HEK293 (cell line): ENCODE measurements at regions of chr7 and their contacts with region 1.

Region 1: GRCh38 chr7:73851410-73852234 is 9.3 kb upstream of the METTL27 start:
- H3K4me3 ChIP-seq: no peak overlapping the region
- H3K27ac ChIP-seq: peak overlapping the region; percentile 24; the same call in 1 of the 2 replicates
- H3K4me1 ChIP-seq: peaks cover 9% of the 10 kb centered on the region
- CTCF ChIP-seq: no peak

Region 2: DNA sequence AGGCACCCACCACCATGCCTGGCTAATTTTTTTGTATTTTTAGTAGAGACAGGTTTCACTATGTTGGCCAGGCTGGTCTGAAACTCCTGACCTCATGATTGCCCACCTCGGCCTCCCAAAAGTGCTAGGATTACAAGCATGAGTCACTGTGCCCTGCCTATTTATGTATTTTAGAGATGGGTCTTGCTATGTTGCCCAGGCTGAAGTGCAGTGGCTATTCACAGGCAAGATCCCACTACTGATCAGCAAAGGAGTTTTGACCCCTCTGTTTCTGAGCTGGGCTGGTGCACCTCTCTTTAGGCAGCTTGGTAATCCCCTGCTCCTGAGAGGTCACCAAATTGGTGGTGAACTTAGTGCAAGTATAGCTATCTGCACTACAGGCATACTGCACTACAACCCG is 119.2 kb before region 1 on chr7:
- CTCF ChIA-PET with region 1: interaction called, 14 read pairs
- POLR2A ChIA-PET with region 1: interaction called, 16 read pairs
- H3K4me3 ChIP-seq: no peak overlapping the region
- H3K27ac ChIP-seq: no peak overlapping the region
- H3K4me1 ChIP-seq: no peaks in the 10 kb centered on the region
- CTCF ChIP-seq: no peak

Region 3: DNA sequence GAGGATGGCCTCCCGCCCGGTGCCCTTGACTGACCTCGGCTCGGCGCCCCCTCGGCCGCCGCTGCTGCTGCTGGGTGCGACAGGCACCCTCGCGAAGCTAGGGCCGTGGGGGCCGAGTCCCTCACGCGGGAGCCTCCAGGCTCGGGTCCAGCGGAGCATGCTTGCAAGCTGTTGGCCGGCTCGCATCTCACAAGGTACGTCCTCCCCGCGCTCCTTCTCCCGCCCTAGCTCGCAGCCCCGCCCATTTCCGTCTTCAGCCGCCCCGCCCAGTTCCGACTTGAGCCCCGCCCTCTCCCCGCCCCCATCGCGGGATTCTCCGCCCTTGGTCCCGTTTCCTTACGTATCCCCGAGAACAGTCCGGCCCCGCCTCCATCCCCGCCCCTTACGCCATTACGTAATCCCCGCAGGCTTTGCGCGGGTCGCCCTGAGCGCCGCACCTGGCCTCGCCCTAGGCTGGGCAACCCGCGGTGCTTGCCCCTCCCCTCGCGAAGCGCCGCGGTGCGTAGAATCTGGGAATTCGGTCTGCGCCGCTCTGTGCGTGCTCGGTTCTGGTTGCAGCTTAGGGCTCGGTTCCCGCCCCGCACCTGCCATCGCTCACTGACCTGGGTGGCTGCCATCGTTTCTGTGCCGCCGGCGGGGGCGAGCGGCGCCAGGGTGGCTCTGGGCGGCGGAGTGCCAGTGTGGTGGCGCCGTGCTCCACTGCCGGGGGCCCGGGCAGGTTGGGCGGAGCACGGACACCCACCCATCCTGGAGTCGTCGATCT is 112.8 kb before region 1 on chr7 and contains the start of gene ABHD11:
- CTCF ChIA-PET with region 1: interaction called, 18 read pairs
- POLR2A ChIA-PET with region 1: interaction called, 16 read pairs
- H3K4me3 ChIP-seq: peak within 1 kb of the TSS; percentile 67
- H3K27ac ChIP-seq: peak within 1 kb of the TSS; percentile 90
- H3K4me1 ChIP-seq: peaks cover 8% of the 10 kb centered on the region
- CTCF ChIP-seq: peak; percentile 72

Region 4: DNA sequence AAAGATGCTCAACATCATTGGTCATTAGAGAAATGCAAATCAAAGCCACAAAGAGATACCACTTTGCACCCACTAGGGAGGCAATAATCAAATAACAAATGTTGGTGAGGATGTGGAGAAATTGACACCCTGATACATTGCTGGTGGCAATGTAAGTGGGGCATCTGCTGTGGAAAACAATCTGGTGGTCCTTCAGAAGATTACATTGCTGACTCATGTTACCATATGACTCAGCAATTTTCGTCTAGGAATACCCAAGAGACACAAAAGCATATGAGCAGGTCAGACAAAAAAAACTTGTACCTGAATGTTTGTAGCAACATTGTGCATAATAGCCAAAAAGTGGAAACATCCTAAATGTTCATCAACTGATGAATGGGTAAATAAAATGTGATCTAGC is 76.7 kb before region 1 on chr7:
- CTCF ChIA-PET with region 1: no interaction called
- POLR2A ChIA-PET with region 1: no interaction called
- H3K4me3 ChIP-seq: no peak overlapping the region
- H3K27ac ChIP-seq: no peak overlapping the region
- H3K4me1 ChIP-seq: no peaks in the 10 kb centered on the region
- CTCF ChIP-seq: no peak

Region 5: DNA sequence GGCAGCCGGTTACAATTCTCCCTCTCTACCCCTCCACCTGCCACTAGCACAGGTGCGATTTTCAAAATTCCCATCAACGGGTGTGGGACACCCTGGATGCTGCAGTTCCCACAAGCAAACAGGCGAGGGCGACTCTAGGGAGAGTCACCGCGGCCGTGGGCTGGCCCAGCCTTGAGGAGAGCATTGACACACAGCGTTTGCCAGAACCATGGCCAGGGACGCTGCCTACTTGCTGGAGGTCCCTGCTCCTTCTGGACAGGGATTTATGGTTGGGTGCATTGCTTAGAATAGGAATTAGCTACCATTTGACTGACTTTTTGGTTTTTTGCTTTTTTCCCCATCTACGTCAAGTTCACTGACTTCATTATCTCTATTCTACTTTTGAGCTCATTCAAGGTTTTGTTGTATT is 39.9 kb before region 1 on chr7:
- CTCF ChIA-PET with region 1: interaction called, 40 read pairs
- POLR2A ChIA-PET with region 1: interaction called, 3 read pairs
- H3K4me3 ChIP-seq: no peak overlapping the region
- H3K27ac ChIP-seq: no peak overlapping the region
- H3K4me1 ChIP-seq: no peaks in the 10 kb centered on the region
- CTCF ChIP-seq: no peak

Region 6: GRCh38 chr7:73822319-73823076 is 29.1 kb before region 1 on chr7:
- CTCF ChIA-PET with region 1: interaction called, 29 read pairs
- POLR2A ChIA-PET with region 1: interaction called, 7 read pairs
- H3K4me3 ChIP-seq: no peak overlapping the region
- H3K27ac ChIP-seq: no peak overlapping the region
- H3K4me1 ChIP-seq: peaks cover 5% of the 10 kb centered on the region
- CTCF ChIP-seq: no peak

Region 7: DNA sequence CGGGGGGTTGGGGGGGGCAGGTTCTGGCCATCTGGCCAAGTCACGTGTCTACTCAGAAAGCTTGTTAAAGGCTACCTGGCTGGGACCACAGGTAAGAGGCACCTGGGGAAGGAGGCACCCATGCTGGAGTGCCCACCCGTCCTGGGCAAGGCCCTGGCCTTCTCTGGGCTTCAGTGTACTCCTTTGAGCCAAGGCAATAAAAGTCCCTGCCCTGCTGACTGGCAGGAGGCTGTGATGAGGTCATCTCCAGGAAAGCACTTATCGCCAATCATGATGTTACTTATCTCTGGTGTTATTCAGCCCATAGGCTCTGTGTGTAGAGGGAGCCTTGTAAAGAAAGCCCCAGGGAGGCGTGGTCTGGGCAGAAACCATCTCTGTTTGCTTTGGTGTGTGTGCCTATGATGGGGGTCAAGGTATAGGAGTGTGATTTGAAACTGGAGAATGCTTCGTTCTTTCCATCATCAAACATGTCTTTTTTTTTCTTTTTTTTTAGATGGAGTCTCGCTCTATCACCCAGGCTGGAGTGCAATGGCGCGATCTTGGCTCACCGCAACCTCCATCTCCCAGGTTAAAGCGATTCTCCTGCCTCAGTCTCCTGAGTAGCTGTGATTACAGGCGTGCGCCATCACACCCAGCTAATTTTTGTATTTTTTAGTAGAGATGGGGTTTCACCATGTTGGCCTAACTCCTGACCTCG is 23.4 kb before region 1 on chr7:
- CTCF ChIA-PET with region 1: interaction called, 29 read pairs
- POLR2A ChIA-PET with region 1: interaction called, 7 read pairs
- H3K4me3 ChIP-seq: peak overlapping the region; percentile 18; the same call in 1 of the 2 replicates
- H3K27ac ChIP-seq: peak overlapping the region; percentile 85
- H3K4me1 ChIP-seq: peaks cover 14% of the 10 kb centered on the region
- CTCF ChIP-seq: no peak